WTC11 (cell line): ENCODE measurements at regions of chr1 and their contacts with region 1.

Region 1: DNA sequence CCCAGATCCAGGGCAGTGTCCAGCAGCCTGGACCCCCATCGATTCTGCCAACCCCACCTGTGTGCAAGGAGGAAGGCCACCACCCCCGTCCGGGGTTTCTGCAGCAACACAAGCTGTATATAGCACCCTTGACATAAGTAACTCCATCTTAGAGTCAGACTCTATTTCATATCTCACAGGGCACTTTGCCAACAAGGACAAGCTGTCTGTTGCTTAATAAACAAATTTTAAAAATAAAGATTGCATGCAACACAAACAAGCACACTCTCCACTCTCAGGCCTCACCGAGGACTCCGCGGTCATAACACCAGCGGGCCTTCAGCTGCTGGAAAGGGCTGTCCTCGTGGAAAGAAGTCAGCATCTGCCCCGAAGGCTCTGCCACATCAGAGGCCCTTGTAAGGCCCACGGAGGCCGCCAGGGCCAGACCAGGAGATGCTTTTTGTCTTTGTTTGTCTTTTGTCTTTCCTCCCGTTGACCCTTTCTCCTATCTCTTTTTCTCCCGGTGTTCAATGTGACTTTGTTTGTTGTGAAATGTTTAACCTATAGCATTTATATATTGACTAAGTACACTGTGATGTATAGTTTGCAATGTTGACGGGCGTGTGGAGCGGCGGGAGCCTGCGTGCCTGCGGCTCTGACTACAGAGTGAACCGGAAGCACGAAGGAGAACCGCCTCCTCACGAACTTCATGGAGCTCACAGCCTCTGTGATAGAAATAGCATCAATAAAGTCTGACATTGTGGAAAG is 24.2 kb downstream of the MEGF6 start:
- DNase-seq: no peak
- ATAC-seq: no peak
- H3K4me3 Mint-ChIP-seq: no peak overlapping the region
- H3K27ac Mint-ChIP-seq: peak overlapping the region; percentile 65
- H3K4me1 Mint-ChIP-seq: 0 out of 2 replicates have a peak, but pooled peaks cover 2% of the 10 kb centered on the region
- H3K27me3 Mint-ChIP-seq: no peaks in the 10 kb centered on the region
- CTCF ChIP-seq: no peak

Region 2: DNA sequence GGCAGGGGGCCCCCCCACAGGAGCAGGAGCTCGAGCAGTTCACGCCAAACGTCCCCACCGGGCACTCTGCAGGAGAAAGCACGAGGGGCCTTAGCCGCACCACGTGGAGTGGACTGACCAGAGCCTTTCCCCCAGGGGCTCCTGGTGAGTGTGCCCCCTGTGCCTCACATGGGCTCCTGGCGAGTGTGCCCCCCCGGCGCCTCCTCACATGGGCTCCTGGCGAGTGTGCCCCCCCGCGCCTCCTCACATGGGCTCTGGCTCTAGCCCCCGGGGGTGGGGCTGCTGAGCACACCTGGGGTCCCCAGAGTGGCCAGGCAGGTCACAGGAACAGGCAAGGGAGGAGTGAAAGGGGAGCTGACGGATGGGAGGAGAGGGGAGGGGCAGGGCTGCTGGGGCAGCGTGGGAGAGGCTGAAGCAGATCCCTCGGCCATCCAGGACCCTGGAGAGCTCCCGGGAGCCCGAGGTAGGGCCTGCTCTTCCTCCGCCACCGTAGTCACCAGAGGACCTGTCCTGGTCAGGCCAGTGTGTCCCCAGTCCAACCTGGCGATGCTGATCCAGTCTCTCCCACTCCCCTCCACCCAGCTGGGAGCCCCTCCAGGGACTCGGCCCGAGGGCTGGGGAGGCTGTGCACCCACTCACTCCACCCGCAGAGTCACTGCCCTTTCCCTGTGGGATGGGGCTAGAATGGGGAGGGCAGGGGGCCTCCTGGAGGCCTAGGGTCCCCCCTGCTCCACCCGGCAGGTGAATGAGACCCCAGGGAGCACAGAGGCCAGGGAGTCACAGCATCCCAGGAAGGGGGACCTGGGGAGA is 85.0 kb before region 1 on chr1:
- CTCF ChIA-PET with region 1: no interaction called
- POLR2A ChIA-PET with region 1: no interaction called
- DNase-seq: peak; percentile 90
- ATAC-seq: peak; percentile 90
- H3K4me3 Mint-ChIP-seq: no peak overlapping the region
- H3K27ac Mint-ChIP-seq: no peak overlapping the region
- H3K4me1 Mint-ChIP-seq: no peaks in the 10 kb centered on the region
- H3K27me3 Mint-ChIP-seq: no peaks in the 10 kb centered on the region
- CTCF ChIP-seq: no peak

Region 3: DNA sequence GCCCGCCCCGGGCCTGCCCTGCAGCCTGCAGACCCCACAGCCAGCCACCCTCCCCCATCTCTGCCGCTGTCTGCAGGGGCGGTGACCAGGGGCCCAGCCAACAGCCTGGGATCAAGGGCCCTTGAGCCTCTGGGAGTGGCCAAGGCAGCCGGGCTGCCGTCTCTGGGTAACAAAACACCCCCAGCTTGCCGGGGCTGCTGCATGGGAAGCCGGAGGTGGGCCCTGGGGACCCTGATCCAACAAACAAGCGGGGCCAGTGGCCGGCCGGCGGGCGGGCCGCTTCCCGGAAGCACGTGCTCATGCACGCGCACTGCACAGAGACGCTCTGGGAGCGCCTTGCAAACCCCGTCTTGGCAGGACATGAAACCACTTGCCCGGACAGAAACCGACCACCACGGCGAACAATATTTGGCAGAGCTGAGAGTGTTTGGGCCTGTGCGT is 11.0 kb after region 1 on chr1:
- CTCF ChIA-PET with region 1: interaction called, 16 read pairs
- POLR2A ChIA-PET with region 1: no interaction called
- DNase-seq: peak; percentile 26
- ATAC-seq: peak; percentile 30
- H3K4me3 Mint-ChIP-seq: no peak overlapping the region
- H3K27ac Mint-ChIP-seq: no peak overlapping the region
- H3K4me1 Mint-ChIP-seq: peaks cover 20% of the 10 kb centered on the region
- H3K27me3 Mint-ChIP-seq: no peaks in the 10 kb centered on the region
- CTCF ChIP-seq: no peak

Region 4: GRCh38 chr1:3604468-3604974 is 17.4 kb after region 1 on chr1:
- CTCF ChIA-PET with region 1: interaction called, 16 read pairs
- POLR2A ChIA-PET with region 1: no interaction called
- DNase-seq: no peak
- ATAC-seq: no peak
- H3K4me3 Mint-ChIP-seq: no peak overlapping the region
- H3K27ac Mint-ChIP-seq: no peak overlapping the region
- H3K4me1 Mint-ChIP-seq: peaks cover 4% of the 10 kb centered on the region
- H3K27me3 Mint-ChIP-seq: no peaks in the 10 kb centered on the region
- CTCF ChIP-seq: no peak

Region 5: DNA sequence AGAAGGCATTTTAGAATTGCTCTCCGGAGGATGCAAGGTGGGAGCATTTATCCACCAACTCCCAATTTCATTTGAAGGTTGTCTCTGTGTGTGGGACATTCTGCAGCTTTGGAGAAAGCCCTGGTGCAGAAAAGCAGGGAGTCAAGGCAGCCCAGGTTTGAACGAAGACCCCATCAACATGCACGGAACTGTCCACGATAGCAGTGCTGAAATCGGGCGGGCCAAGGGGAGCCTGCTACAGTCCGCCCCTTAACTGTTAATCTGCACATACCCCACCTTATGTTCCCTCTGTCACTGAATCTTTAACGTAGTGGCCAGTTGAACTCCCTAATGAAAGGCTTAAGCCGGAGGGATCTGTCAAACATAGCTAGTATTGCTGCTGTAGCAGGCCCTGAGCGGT is 381.7 kb after region 1 on chr1:
- CTCF ChIA-PET with region 1: no interaction called
- POLR2A ChIA-PET with region 1: no interaction called
- DNase-seq: no peak
- ATAC-seq: no peak
- H3K4me3 Mint-ChIP-seq: no peak overlapping the region
- H3K27ac Mint-ChIP-seq: no peak overlapping the region
- H3K4me1 Mint-ChIP-seq: no peaks in the 10 kb centered on the region
- H3K27me3 Mint-ChIP-seq: peaks cover 7% of the 10 kb centered on the region
- CTCF ChIP-seq: no peak